IMR-90 (cell line): ENCODE measurements at regions of chr15 and their contacts with region 1.

Region 1: DNA sequence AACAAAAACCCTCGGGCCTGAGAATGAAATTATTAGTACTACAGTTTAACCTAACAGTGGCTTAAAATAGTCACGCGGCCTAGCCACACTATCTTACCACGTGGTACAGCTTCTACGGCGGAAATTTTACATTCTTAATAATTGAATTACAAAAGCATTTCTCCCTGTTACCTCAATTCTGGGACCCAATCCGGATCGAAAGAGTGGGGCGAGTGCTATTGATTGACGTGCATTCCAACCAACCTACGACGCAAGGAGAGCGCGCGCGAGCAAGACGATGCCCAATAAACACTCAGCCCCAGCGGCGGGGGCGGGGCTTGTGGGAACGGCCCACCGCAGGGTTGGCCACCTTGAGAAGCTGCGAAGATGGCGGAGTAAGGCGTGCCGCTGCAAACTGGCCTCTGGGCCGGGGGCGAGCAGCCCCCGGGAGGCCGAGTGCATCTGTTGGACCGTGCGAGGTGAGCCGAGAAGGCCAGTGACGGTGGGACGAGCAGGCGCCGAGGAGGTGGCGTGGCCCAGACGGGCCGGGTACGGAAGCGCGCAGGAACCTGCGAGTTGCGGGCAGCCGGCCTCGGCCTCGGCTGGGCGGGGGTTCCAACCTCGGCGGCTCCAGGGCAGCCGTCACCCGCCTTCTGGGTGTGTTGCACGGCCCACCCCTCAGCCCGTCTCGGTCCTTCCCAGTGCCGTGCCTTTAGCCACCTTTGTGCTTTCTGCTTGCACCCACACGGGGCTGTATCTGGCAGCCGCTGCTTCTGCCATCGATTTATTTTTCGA is 48.6 kb downstream of the OIP5 start:
- DNase-seq: peak; percentile 99
- ATAC-seq: peak; percentile 98
- H3K4me3 ChIP-seq: peak overlapping the region; percentile 81
- H3K27ac ChIP-seq: peak overlapping the region; percentile 79
- H3K4me1 ChIP-seq: peaks cover 6% of the 10 kb centered on the region
- H3K27me3 ChIP-seq: no peaks in the 10 kb centered on the region
- CTCF ChIP-seq: no peak
- POLR2A ChIP-seq: peak; percentile 40; the same call in 1 of the 2 replicates
- RAD21 ChIP-seq: no peak

Region 2: DNA sequence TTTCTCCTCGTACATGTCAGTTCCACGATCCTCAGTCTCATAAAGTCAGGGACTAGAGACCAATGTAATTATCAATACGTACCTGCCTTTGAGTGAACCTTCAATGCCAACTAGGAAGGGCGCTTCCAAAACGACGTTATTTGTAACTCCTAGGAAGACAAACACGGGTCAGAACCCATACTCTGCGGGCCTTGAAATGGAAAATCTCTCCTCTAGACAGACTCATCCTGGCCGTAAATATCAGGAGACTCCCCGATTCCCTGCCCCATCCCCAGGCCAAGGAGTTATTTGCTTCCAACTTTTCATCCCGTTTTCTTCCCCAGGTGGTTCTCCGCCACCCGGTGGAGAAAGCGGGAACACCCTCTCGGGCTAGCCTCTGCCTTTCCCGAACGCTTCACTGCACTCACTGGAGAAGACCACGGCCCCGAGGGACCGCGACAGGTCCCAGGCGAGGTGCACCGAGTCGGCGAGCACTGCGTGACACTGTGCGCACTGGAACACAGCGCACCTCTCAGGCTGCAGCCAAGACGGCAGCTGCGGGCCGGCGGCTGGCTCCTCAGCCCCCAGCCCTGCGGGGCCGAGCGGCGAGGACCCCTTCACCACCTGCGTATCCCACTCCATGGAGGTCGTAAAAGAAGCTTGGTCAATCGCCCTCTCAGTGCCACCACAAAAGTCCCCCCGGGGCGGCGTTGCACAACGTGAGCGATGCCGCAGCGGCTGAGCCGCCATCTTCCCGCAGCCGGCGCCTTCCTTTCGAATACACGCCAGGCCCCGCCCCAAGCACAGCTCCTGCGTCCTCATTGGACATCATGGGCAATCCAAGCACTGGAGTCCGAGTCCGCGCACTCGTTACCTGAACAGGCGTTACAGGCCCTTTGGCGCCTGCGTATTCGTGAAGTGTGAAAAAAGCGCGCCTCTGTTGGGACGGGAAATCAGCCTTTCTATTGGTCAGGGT is 48.3 kb after region 1 on chr15 and contains the start of gene OIP5:
- CTCF ChIA-PET with region 1: no interaction called
- POLR2A ChIA-PET with region 1: no interaction called
- dilution Hi-C with region 1: no loop called
- in situ Hi-C with region 1: no loop called
- intact Hi-C with region 1: loop called (anchors 5 kb)
- DNase-seq: peak; percentile 100
- ATAC-seq: peak; percentile 98
- H3K4me3 ChIP-seq: peak within 1 kb of the TSS; percentile 70
- H3K27ac ChIP-seq: peak within 1 kb of the TSS; percentile 45; the same call in 1 of the 2 replicates
- H3K4me1 ChIP-seq: no peaks in the 10 kb centered on the region
- H3K27me3 ChIP-seq: no peaks in the 10 kb centered on the region
- CTCF ChIP-seq: peak; percentile 64
- POLR2A ChIP-seq: 0 out of 2 replicates have a peak, but pooled peaks have one; percentile 12
- RAD21 ChIP-seq: peak; percentile 69
- total RNA-seq, gene OIP5: 4.1 and 7.5 TPM in 2 replicates

Region 3: DNA sequence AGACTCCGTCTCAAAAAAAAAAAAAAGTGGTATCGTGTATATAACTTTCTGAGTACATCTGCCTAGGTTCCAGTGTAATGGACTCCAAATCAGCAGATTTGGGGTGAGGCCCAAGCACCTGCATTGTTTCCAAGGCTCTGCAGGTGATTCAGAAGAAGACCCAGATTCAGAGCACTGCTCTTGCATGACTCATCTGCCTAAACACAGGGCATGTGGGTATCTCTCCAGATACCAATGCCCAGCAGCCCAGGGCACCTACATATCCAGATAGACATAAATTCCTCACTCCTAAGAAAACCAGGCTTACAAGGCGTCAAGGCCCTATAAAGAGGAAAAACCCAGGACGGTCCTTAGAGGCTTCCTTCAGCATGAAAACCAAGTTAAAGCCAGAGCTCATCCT is 94.1 kb after region 1 on chr15:
- CTCF ChIA-PET with region 1: no interaction called
- POLR2A ChIA-PET with region 1: no interaction called
- dilution Hi-C with region 1: no loop called
- in situ Hi-C with region 1: no loop called
- intact Hi-C with region 1: no loop called
- DNase-seq: no peak
- ATAC-seq: no peak
- H3K4me3 ChIP-seq: no peak overlapping the region
- H3K27ac ChIP-seq: no peak overlapping the region
- H3K4me1 ChIP-seq: no peaks in the 10 kb centered on the region
- H3K27me3 ChIP-seq: no peaks in the 10 kb centered on the region
- CTCF ChIP-seq: no peak
- POLR2A ChIP-seq: no peak
- RAD21 ChIP-seq: no peak